ENCODE measurements at regions of chr19 and their contacts with region 1.

Region 1: DNA sequence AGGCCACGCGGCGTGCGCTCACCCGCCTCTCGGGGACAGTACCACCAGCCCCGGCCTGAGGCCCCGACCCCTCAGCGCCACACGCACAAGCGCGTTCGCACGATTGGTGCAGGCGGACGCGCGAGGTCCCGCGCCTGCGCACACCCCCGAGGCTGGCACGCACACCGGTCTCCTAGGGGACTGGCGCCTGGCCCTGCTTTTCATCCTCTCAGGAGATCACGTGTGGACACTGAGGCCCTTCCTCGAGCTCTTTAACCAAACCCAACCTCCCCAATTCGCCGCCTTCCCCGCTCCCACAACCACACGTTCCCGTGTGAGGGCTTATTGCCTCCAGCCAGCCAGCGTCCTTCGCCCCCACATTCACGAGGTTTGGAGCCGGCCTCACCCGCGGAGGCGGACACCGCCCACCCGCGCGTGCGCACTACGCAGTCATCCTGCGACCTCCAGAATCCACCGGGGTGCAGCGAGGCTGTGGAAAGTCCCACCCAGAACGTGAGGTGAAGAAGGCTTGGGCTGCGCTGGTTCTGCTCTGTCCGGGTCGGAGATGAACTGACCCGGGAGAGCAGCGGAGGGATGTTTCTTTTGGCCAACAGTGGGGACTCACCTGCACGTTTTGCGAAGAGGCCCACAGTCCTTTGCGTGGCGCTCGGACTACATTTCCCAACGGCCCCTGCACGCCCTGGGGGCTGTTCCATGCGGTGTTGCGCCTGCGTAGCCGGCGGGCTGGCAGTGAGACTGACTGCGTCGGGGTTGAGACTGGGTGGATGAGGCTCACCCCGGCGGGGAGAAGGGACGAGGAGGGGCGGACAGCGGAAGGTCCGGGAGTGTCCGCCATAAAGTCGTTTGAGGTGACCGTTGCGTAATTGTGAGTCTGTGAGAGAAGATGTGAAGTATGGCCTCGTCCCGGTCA is 539 bp upstream of the ZNF667 start:
- DNase-seq: peak; percentile 93
- ATAC-seq: peak; percentile 80
- H3K4me3 ChIP-seq: peak overlapping the region; percentile 69 to 76 (median 70)
- H3K4me3 Mint-ChIP-seq: peak overlapping the region; percentile 99
- H3K27ac ChIP-seq: peak overlapping the region; percentile 87 to 94
- H3K27ac Mint-ChIP-seq: peak overlapping the region; percentile 94
- H3K4me1 ChIP-seq: peaks cover 11 to 20% of the 10 kb centered on the region in 2 donors
- H3K4me1 Mint-ChIP-seq: peaks cover 18% of the 10 kb centered on the region
- H3K27me3 ChIP-seq: no peaks in the 10 kb centered on the region
- H3K27me3 Mint-ChIP-seq: peaks cover 19% of the 10 kb centered on the region
- CTCF ChIP-seq: no peak

Region 2: DNA sequence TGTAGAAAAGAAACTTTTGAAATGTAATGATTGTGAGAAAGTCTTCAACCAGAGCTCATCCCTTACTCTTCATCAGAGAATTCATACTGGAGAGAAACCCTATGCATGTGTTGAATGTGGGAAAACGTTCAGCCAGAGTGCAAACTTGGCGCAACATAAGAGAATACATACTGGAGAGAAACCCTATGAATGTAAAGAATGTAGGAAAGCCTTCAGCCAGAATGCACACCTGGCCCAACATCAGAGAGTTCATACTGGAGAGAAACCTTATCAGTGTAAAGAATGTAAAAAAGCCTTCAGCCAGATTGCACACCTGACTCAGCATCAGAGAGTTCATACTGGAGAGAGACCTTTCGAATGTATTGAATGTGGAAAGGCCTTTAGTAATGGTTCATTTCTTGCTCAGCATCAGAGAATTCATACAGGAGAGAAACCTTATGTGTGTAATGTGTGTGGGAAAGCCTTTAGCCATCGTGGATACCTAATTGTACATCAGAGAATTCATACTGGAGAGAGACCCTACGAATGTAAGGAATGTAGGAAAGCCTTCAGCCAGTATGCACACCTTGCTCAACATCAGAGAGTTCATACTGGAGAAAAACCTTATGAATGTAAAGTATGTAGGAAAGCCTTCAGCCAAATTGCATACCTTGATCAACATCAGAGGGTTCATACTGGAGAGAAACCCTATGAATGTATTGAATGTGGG is 54.3 kb before region 1 on chr19:
- CTCF ChIA-PET with region 1: no interaction called
- POLR2A ChIA-PET with region 1: no interaction called
- intact Hi-C with region 1: no loop called
- DNase-seq: no peak
- ATAC-seq: no peak
- H3K4me3 ChIP-seq: no peak overlapping the region
- H3K4me3 Mint-ChIP-seq: no peak overlapping the region
- H3K27ac ChIP-seq: no peak overlapping the region
- H3K27ac Mint-ChIP-seq: no peak overlapping the region
- H3K4me1 ChIP-seq: no peaks in the 10 kb centered on the region
- H3K4me1 Mint-ChIP-seq: no peaks in the 10 kb centered on the region
- H3K27me3 ChIP-seq: no peaks in the 10 kb centered on the region
- H3K27me3 Mint-ChIP-seq: no peaks in the 10 kb centered on the region
- CTCF ChIP-seq: no peak

Region 3: DNA sequence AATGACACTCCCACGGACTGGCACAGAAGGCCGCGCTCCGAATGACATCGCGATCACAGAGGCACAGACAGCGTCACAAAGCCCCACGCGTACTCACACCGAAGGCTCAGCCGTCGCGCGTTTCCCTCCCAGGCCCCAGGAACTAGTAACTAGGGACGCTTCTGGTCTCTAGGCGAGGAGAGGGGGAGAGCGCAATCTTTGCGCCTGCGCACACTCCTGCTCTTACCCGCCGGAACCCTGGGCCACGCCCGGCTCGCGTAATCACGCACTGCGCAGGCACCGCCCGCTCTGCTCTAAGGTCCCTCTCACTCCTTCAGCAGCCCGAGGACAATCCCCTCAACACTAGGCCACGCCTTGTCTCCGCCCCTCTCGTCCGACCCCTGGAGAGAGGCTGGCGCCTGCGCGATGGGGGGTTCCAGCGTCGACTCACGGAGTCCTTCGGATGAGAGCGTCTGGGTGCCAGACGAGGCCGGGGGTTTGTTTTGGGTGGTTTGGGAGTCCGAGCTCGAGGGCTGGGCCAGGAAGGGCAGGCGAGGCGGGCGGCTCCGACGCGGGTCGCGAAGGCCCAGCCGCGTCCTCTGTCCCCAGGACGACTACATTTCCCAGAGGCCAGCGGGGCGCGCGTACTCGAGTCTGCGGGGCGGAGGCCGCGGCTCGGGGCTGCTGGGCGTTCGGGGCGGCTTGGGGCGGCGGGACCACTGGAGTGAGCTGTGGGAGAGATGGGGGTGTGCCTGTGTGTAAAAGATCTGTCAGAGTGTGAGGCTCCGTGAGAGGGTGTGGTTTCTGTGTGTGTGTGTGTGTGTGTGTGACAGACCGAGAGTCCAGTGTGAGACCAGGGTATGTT is 30.0 kb after region 1 on chr19 and contains the start of gene ZNF471:
- CTCF ChIA-PET with region 1: no interaction called
- POLR2A ChIA-PET with region 1: no interaction called
- intact Hi-C with region 1: loop called (anchors 1 kb)
- DNase-seq: peak; percentile 95
- ATAC-seq: peak; percentile 99
- H3K4me3 ChIP-seq: peak within 1 kb of the TSS; percentile 55 to 77 (median 67)
- H3K4me3 Mint-ChIP-seq: no peak within 1 kb of the TSS
- H3K27ac ChIP-seq: peak within 1 kb of the TSS; percentile 89 to 97
- H3K27ac Mint-ChIP-seq: no peak within 1 kb of the TSS
- H3K4me1 ChIP-seq: peaks cover 10 to 13% of the 10 kb centered on the region in 2 donors
- H3K4me1 Mint-ChIP-seq: peaks cover 9% of the 10 kb centered on the region
- H3K27me3 ChIP-seq: no peaks in the 10 kb centered on the region
- H3K27me3 Mint-ChIP-seq: no peaks in the 10 kb centered on the region
- CTCF ChIP-seq: no peak
- total RNA-seq, gene ZNF471: 4.7 and 5.9 TPM in 2 replicates